ENCODE measurements at regions of chr2 and their contacts with region 1.

Region 1: DNA sequence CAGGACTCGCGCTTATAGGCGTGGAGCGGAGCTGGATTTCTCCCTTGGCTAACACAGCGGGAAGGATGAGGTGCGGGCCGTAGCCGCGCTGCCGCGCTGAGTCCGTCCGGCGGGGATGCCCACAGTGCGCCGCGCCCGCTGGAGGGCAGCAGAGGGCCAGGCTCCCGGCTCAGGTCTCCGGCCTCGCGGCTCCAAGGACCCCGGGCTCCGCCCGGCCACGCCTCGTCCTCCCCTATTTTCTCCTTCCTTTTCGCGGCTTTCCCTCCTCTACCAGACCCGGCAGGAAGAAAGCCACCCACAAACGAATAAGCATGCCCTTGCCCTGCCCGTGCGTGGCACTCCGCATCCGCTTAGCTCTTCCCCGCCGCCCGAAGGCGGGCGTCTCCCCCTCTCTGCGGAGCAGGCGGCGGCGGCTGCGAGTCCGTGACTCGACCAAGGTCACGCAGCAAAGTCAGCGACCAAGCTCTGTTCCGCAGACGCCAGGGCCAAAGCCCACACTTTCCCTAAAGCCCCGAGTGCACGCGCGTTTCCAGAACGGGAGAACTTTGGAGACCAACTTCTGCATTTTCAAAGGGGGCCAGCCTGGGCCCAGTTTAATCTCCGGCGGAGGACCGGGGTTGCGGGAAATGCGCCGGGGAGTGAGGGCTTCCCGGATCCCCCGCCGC is 48.6 kb downstream of the KCNIP3 start:
- DNase-seq: peak; percentile 20
- H3K4me3 ChIP-seq: peak overlapping the region; percentile 58
- H3K27ac ChIP-seq: no peak overlapping the region
- H3K27me3 ChIP-seq: peaks cover 37% of the 10 kb centered on the region
- CTCF ChIP-seq: peak; percentile 87

Region 2: GRCh38 chr2:95334916-95335641 is 10.6 kb before region 1 on chr2:
- CTCF ChIA-PET with region 1: interaction called, 10 read pairs
- POLR2A ChIA-PET with region 1: no interaction called
- DNase-seq: no peak
- H3K4me3 ChIP-seq: no peak overlapping the region
- H3K27ac ChIP-seq: no peak overlapping the region
- H3K27me3 ChIP-seq: peaks cover 11% of the 10 kb centered on the region
- CTCF ChIP-seq: no peak

Region 3: GRCh38 chr2:95359031-95359430 is 13.3 kb after region 1 on chr2:
- CTCF ChIA-PET with region 1: interaction called, 15 read pairs
- POLR2A ChIA-PET with region 1: no interaction called
- DNase-seq: peak; percentile 15
- H3K4me3 ChIP-seq: no peak overlapping the region
- H3K27ac ChIP-seq: no peak overlapping the region
- H3K27me3 ChIP-seq: peaks cover 3% of the 10 kb centered on the region
- CTCF ChIP-seq: no peak

Region 4: GRCh38 chr2:95379371-95379831 is 33.7 kb after region 1 on chr2:
- CTCF ChIA-PET with region 1: no interaction called
- POLR2A ChIA-PET with region 1: no interaction called
- DNase-seq: no peak
- H3K4me3 ChIP-seq: no peak overlapping the region
- H3K27ac ChIP-seq: no peak overlapping the region
- H3K27me3 ChIP-seq: peaks cover 2% of the 10 kb centered on the region
- CTCF ChIP-seq: no peak; the same call in 1 of the 2 replicates

Region 5: GRCh38 chr2:95389245-95390119 is 43.8 kb after region 1 on chr2:
- CTCF ChIA-PET with region 1: interaction called, 14 read pairs
- POLR2A ChIA-PET with region 1: no interaction called
- DNase-seq: peak; percentile 20
- H3K4me3 ChIP-seq: no peak overlapping the region
- H3K27ac ChIP-seq: no peak overlapping the region
- H3K27me3 ChIP-seq: peaks cover 8% of the 10 kb centered on the region
- CTCF ChIP-seq: peak; percentile 98

Region 6: GRCh38 chr2:95402370-95403203 is 56.9 kb after region 1 on chr2 and contains the start of gene FAHD2A:
- CTCF ChIA-PET with region 1: interaction called, 11 read pairs
- POLR2A ChIA-PET with region 1: no interaction called
- DNase-seq: peak; percentile 52
- H3K4me3 ChIP-seq: peak within 1 kb of the TSS; percentile 97
- H3K27ac ChIP-seq: peak within 1 kb of the TSS; percentile 65
- H3K27me3 ChIP-seq: no peaks in the 10 kb centered on the region
- CTCF ChIP-seq: no peak
- polyA plus RNA-seq, gene FAHD2A: 24.9 and 30.9 TPM in 2 replicates

Region 7: GRCh38 chr2:95574506-95574905 is 228.8 kb after region 1 on chr2:
- CTCF ChIA-PET with region 1: no interaction called
- POLR2A ChIA-PET with region 1: no interaction called
- DNase-seq: no peak
- H3K4me3 ChIP-seq: no peak overlapping the region
- H3K27ac ChIP-seq: no peak overlapping the region
- H3K27me3 ChIP-seq: no peaks in the 10 kb centered on the region
- CTCF ChIP-seq: no peak